Activated CD4-positive, alpha-beta T cell treated with anti-CD3 and anti-CD28 coated beads, Interleukin-2, amount 10 ng/mL, durations not matched to agents 24 days and 14 days (primary cell): ENCODE measurements at regions of chr4 and their contacts with region 1.

Region 1: GRCh38 chr4:81069706-81070331 is 39.3 kb downstream of the BMP3 start:
- DNase-seq: peak; percentile 86
- H3K4me3 Mint-ChIP-seq: no peak overlapping the region
- H3K27ac Mint-ChIP-seq: no peak overlapping the region
- H3K4me1 Mint-ChIP-seq: no peaks in the 10 kb centered on the region
- H3K27me3 Mint-ChIP-seq: peaks cover 12% of the 10 kb centered on the region

Region 2: DNA sequence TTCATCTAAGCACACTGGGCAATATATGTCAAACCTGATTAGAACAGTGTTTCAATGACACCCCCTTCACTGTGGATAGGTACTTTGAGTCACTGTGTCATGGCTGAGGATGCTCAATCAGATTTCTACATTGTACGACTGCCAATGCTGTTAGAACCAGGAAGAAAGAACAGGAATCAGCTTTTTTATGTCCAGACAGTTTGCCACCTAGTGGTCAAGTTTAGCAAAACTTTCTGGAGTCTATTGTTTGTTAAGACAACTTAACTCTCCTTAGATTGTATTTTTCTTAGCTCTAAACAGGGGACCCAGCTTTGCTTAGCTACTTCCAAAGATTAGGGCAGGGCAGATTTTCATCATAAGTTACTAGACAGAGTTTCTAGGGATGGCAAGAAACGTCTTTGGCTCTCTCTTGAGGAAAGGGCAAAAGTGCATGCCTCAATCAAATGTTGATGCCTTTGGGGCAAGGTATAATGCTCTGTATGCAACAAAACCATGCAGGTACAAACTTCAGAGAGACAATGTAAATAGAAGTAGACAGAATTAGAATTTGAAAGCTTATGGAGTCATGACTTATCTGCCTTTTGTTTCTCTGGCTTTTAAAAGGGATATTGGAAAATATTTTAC is 79.8 kb before region 1 on chr4:
- intact Hi-C with region 1: no loop called
- DNase-seq: peak; percentile 72
- H3K4me3 Mint-ChIP-seq: no peak overlapping the region
- H3K27ac Mint-ChIP-seq: no peak overlapping the region
- H3K4me1 Mint-ChIP-seq: no peaks in the 10 kb centered on the region
- H3K27me3 Mint-ChIP-seq: peaks cover 4% of the 10 kb centered on the region

Region 3: DNA sequence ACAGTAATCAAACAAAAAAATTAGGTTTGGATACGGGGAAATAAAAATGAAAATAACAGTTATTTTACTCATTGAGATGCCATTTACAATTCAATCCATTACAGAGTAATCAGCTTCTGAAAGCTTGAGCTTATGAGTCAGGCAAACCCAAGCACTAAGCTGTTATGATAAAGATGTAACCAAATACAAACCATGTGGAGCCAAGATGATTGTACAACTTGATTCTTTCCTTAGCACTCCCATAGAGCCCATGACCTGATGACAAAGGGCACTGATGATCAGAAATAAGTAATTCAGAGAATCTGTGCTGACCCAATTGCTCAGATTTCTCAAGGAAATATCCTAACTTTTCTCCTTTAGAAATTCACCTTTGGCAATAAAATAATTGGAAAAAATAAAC is 185.7 kb after region 1 on chr4:
- intact Hi-C with region 1: loop called (anchors 10 kb)
- DNase-seq: no peak
- H3K4me3 Mint-ChIP-seq: no peak overlapping the region
- H3K27ac Mint-ChIP-seq: no peak overlapping the region
- H3K4me1 Mint-ChIP-seq: no peaks in the 10 kb centered on the region
- H3K27me3 Mint-ChIP-seq: no peaks in the 10 kb centered on the region

Region 4: DNA sequence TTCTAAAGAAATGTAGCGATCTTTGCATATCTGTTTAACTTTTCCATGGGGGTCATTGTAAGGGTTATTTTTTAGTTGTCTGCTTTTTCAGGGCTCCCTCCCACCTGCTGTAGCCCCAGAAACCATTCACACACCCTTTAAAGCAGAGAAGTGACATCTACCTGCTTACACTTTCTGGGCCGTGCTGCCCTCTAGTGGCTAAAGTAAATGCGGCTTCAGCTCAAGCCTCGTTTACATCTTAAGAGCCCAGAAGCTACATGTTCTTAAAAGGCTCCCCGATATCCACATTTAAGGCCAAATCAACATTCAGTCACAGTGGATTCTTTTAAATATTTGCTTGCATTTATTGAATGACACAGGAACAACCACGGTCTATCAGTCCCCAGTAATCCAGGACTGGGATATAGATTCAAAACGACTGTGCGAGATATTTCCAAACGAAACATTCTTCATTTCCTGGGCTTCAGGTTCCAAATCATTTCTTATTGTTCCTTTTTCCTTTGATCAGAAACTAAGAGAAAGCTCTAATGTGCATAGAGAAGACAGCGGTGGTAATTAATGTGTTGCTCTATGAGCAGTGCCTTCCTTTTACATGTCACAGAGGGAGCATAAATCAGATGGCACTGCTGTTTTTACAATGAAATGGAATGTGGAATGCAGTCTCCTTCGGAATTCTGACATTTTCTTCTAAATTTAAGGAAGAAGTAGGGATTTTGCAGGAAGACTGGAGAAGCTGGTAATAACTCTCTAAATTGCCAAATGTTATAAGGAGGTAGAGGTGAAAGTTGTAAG is 282.0 kb after region 1 on chr4:
- intact Hi-C with region 1: loop called (anchors 1 kb)
- DNase-seq: peak; percentile 86
- H3K4me3 Mint-ChIP-seq: no peak overlapping the region
- H3K27ac Mint-ChIP-seq: no peak overlapping the region
- H3K4me1 Mint-ChIP-seq: no peaks in the 10 kb centered on the region
- H3K27me3 Mint-ChIP-seq: peaks cover 5% of the 10 kb centered on the region

Region 5: GRCh38 chr4:81494031-81494431 is 424.2 kb after region 1 on chr4:
- intact Hi-C with region 1: no loop called
- DNase-seq: no peak
- H3K4me3 Mint-ChIP-seq: peak overlapping the region; percentile 70
- H3K27ac Mint-ChIP-seq: peak overlapping the region; percentile 72
- H3K4me1 Mint-ChIP-seq: peaks cover 37% of the 10 kb centered on the region
- H3K27me3 Mint-ChIP-seq: peaks cover 1% of the 10 kb centered on the region